Activated T-helper 1 cell treated with anti-CD3 and anti-CD28 coated beads, Interleukin-12 subunit alpha, Interleukin-12 subunit beta, Interleukin-2, Interleukin-4 antibody, amounts not matched to agents 30 ng/mL and 10 ng/mL and 1 ng/mL, durations not matched to agents 14 hours and 24 hours and 36 hours (primary cell): ENCODE measurements at regions of chr7 and their contacts with region 1.

Region 1: GRCh38 chr7:2773601-2774000 is 70.5 kb downstream of the GNA12 start:
- DNase-seq: no peak
- H3K4me3 Mint-ChIP-seq: no peak overlapping the region
- H3K27ac Mint-ChIP-seq: peak overlapping the region; percentile 90
- H3K4me1 Mint-ChIP-seq: peaks cover 37% of the 10 kb centered on the region
- H3K27me3 Mint-ChIP-seq: no peaks in the 10 kb centered on the region

Region 2: DNA sequence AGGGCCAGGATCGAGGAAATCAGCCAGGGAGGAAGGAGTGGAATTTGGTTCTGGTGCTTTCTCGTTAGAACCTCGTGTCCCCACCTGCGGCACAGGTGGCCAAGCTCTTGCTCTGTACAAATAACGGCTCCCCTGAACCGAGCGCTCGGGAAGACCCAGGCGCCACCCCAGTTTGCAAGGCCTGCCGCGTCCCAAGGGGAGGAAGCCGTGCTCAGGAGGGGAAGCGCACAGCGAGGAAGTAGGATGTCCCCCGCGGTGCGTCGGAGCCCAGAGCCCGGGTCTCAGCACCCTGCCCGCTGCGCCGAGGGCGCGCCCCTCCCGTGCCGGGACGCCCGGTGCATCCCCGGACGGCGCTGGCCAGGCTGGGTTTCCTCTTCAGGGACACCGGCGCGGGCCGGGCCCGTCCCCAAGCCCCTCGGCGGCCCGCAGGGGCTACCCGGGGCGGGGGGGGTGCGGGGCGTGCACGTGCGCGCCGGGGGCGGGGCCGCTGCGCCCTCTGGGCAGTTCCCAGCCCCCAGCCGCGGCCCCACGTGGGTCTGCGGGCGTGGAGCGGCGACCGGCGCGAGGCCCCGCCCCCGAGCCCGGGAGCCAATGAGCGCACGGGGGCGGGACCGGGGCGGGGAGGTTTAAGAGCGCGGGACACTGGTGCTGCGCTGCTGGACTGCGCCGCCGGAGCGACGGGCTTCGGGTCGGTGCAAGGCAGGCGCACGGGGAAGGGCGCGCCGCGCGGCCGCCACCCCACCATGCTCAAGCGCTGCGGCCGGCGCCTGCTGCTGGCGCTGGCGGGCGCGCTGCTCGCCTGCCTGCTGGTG is 254.3 kb before region 1 on chr7 and contains the start of gene LFNG:
- intact Hi-C with region 1: no loop called
- DNase-seq: peak; percentile 84
- H3K4me3 Mint-ChIP-seq: peak within 1 kb of the TSS; percentile 97
- H3K27ac Mint-ChIP-seq: peak within 1 kb of the TSS; percentile 91
- H3K4me1 Mint-ChIP-seq: peaks cover 35% of the 10 kb centered on the region
- H3K27me3 Mint-ChIP-seq: no peaks in the 10 kb centered on the region
- total RNA-seq, gene LFNG: 34.8 and 34.9 TPM in 2 replicates

Region 3: DNA sequence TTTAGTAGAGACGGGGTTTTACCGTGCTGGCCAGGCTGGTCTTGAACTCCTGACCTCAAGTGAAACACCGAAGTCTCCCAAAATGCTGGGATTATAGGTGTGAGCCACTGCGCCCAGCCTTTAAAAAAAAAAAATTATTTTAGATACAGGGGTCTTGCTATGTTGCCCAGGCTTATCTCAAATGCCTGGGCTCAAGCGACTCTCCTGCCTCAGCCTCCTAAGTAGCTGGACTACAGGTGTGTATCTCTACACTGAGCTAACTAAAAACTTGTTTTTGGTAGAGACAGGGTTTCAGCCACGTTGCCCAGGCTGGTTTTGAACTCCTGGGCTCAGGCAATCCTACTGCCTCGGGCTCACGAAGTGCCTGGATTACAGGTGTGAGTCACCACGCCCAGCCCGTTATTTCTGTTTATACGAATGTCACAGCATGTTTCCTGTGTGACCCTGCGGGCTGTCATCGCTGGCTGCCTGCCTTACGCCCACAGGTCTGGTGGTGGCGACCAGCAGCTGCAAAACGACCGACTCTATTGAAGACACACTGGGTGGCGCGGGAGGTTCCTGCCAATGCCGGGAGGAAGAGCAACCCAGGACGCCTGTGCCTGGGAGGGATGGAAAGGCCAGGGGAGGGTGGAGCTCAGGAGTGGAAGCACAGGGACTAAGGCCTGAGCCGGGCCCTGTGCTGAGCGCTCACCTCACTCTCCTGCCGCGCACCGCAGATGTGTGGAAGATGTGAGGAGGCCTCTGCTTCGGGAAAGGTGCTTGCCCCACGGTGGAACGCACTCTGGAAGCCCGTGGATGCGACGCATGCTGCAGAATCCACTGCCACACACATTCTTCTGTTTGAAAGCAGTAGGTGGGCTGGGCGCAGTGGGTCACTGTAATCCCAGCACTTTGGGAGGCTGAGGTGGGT is 52.8 kb before region 1 on chr7:
- intact Hi-C with region 1: loop called (anchors 2 kb)
- DNase-seq: peak; percentile 63
- H3K4me3 Mint-ChIP-seq: peak overlapping the region; percentile 34
- H3K27ac Mint-ChIP-seq: peak overlapping the region; percentile 65
- H3K4me1 Mint-ChIP-seq: peaks cover 49% of the 10 kb centered on the region
- H3K27me3 Mint-ChIP-seq: no peaks in the 10 kb centered on the region

Region 4: GRCh38 chr7:2732959-2733584 is 40.5 kb before region 1 on chr7:
- intact Hi-C with region 1: no loop called
- DNase-seq: no peak
- H3K4me3 Mint-ChIP-seq: peak overlapping the region; percentile 6
- H3K27ac Mint-ChIP-seq: no peak overlapping the region
- H3K4me1 Mint-ChIP-seq: peaks cover 31% of the 10 kb centered on the region
- H3K27me3 Mint-ChIP-seq: no peaks in the 10 kb centered on the region

Region 5: DNA sequence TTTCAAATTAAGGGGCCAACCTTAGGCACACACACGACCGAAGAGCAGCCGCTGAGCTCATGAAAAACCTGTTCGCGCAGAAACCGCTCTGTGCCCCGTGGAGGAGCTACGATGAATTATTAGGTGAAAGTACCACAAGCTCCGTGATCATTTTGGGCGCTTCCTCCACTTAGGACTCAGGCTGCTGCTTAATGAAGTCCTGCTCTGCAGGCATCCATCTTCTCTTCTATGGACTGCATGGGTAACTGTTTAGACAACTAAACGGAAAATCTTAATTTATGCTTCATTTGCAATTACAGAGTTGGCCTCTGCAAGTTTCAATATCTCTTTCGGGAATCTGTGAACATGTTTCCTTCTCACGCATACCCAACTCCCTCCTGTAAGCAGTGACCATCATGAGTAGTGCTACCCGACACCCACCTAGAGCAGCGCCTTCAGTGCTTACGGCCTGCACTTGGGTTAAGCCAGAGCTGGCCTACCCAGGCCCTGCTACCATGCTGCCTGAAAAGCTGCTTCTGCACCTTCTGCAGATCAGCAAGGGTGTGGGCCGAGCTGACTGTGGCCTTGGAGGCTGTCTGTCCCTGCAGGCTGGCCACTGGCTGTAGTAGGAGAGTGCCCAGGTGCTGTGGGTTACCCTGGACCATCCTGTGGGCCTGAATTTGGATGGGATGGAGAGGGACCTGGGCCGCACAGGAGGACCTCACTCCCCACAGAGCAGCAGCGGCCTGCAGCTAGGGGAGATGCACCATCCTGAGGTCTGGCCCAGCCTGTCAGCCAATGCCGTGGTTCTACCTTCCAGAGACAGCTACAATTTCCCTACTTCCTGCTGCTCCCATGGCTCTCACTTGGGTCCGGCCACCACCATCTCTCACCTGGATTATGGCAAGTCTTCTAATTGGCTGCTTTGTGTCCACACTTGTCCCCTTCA is 34.5 kb after region 1 on chr7:
- intact Hi-C with region 1: no loop called
- DNase-seq: no peak
- H3K4me3 Mint-ChIP-seq: no peak overlapping the region
- H3K27ac Mint-ChIP-seq: no peak overlapping the region
- H3K4me1 Mint-ChIP-seq: peaks cover 6% of the 10 kb centered on the region
- H3K27me3 Mint-ChIP-seq: no peaks in the 10 kb centered on the region

Region 6: GRCh38 chr7:2821842-2822507 is 48.4 kb after region 1 on chr7:
- intact Hi-C with region 1: loop called (anchors 1 kb)
- DNase-seq: no peak
- H3K4me3 Mint-ChIP-seq: no peak overlapping the region
- H3K27ac Mint-ChIP-seq: no peak overlapping the region
- H3K4me1 Mint-ChIP-seq: peaks cover 54% of the 10 kb centered on the region
- H3K27me3 Mint-ChIP-seq: no peaks in the 10 kb centered on the region

Region 7: DNA sequence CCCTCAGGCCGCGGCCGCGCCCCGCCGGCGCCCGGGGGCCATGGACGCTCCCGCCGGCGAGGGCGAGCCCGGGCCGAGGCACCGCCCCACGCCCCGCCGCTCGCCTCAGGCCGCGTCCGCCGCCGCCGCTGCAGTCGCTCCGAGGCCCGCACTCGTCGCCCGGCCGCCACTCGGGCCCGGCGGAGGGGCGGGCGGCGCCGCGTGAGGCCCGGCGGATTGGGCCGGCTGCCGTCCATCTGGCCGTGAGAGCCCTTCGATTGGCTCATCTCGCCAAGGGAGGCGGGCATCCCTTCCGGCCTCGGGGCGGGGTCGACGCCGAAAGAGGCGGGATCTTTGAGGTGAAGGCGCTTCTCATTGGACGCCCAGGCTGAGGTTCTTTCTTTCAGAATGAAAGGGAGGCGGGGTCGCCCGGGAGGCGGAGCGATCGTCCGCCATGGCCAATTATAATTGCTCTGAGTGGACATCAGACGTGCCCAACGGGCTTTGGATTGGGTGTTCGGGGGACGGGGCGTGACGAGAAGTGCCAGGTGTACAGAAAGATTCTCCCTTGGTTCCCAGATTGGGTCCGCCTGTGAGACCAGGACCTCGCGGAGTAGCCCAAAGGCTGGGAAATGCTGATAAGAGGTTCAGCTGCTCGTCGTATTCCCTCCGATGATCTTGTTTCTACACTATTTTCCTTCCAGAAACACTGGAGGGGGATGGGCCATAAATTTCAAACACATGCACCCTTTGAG is 70.7 kb after region 1 on chr7 and contains the start of gene GNA12:
- intact Hi-C with region 1: loop called (anchors 2 kb)
- DNase-seq: peak; percentile 99
- H3K4me3 Mint-ChIP-seq: peak within 1 kb of the TSS; percentile 90
- H3K27ac Mint-ChIP-seq: peak within 1 kb of the TSS; percentile 72
- H3K4me1 Mint-ChIP-seq: peaks cover 31% of the 10 kb centered on the region
- H3K27me3 Mint-ChIP-seq: no peaks in the 10 kb centered on the region
- total RNA-seq, gene GNA12: 36.3 and 36.4 TPM in 2 replicates